Psoas muscle (tissue), 8 donors: ENCODE measurements at regions of chr22 and their contacts with region 1.

Region 1: DNA sequence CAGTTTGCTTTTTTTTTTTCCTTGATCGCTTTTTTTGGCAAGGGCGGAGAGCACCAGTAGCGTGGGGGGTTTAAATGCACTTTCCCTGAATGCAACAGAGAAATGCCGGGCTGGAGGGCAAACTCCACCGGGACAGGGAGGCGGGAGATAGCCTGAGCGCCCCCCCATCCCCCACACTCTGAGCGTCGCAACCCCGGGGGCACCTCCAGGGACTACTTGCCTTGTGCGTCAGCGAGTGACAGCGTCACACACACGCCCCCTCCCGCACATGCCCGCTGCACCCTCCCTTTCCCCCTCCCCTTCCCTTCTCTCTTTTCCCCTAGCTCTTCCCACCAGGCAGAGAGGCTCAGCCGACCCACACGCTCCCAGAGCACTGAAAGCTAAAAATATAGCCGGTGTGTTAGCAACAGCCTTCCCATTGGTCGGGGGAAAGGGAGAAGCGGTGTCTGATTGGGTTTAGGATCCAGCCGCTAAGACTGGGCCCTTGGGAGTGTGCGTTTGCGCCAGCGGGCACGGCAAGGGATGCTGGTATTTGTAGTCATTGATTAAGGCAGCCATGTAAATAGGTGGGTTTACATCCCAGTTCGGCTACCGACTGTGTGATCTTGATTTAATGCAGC is 1.7 kb upstream of the TOB2 start:
- DNase-seq: peak; percentile 94 to 98
- ATAC-seq: peak; percentile 65 to 78 (median 77)
- H3K4me3 ChIP-seq: peak overlapping the region; percentile 98
- H3K27ac ChIP-seq: peak overlapping the region; percentile 99
- H3K4me1 ChIP-seq: peaks cover 15% of the 10 kb centered on the region
- H3K27me3 ChIP-seq: no peaks in the 10 kb centered on the region
- CTCF ChIP-seq: no peak

Region 2: GRCh38 chr22:39502109-39502788 is 1946.0 kb before region 1 on chr22 and contains the start of gene MIEF1:
- intact Hi-C with region 1: no loop called
- DNase-seq: peak; percentile 98 to 99
- ATAC-seq: peak; percentile 98 to 99 (median 99)
- H3K4me3 ChIP-seq: peak within 1 kb of the TSS; percentile 87
- H3K27ac ChIP-seq: peak within 1 kb of the TSS; percentile 91
- H3K4me1 ChIP-seq: peaks cover 19% of the 10 kb centered on the region
- H3K27me3 ChIP-seq: no peaks in the 10 kb centered on the region
- CTCF ChIP-seq: no peak
- total RNA-seq, gene MIEF1: 8.6 to 18.7 (median 13.3) TPM

Region 3: GRCh38 chr22:41352051-41352450 is 96.2 kb before region 1 on chr22:
- intact Hi-C with region 1: no loop called
- DNase-seq: no peak
- ATAC-seq: peak in 1 of 4 donors; percentile 17
- H3K4me3 ChIP-seq: no peak overlapping the region
- H3K27ac ChIP-seq: no peak overlapping the region
- H3K4me1 ChIP-seq: no peaks in the 10 kb centered on the region
- H3K27me3 ChIP-seq: no peaks in the 10 kb centered on the region
- CTCF ChIP-seq: no peak

Region 4: GRCh38 chr22:41403532-41404318 is 44.6 kb before region 1 on chr22:
- intact Hi-C with region 1: loop called in 1 of 2 experiments (anchors 5 kb)
- DNase-seq: peak; percentile 94 to 98
- ATAC-seq: peak; percentile 92 to 95 (median 94)
- H3K4me3 ChIP-seq: no peak overlapping the region
- H3K27ac ChIP-seq: peak overlapping the region; percentile 80
- H3K4me1 ChIP-seq: peaks cover 22% of the 10 kb centered on the region
- H3K27me3 ChIP-seq: no peaks in the 10 kb centered on the region
- CTCF ChIP-seq: peak; percentile 99

Region 5: GRCh38 chr22:41468381-41469217 is 20.3 kb after region 1 on chr22 and contains the starts of genes ACO2 and PHF5A:
- intact Hi-C with region 1: loop called in 1 of 2 experiments (anchors 2 kb)
- DNase-seq: peak; percentile 98 to 99
- ATAC-seq: peak; percentile 91 to 97 (median 94)
- H3K4me3 ChIP-seq: peak within 1 kb of the TSS; percentile 98
- H3K27ac ChIP-seq: peak within 1 kb of the TSS; percentile 96
- H3K4me1 ChIP-seq: peaks cover 51% of the 10 kb centered on the region
- H3K27me3 ChIP-seq: no peaks in the 10 kb centered on the region
- CTCF ChIP-seq: no peak
- total RNA-seq, gene ACO2: 422 to 513 (median 474) TPM
- total RNA-seq, gene PHF5A: 19.9 to 40.0 (median 23.4) TPM

Region 6: GRCh38 chr22:41888627-41889200 is 440.4 kb after region 1 on chr22:
- intact Hi-C with region 1: no loop called
- DNase-seq: no peak
- ATAC-seq: no peak
- H3K4me3 ChIP-seq: no peak overlapping the region
- H3K27ac ChIP-seq: no peak overlapping the region
- H3K4me1 ChIP-seq: peaks cover 19% of the 10 kb centered on the region
- H3K27me3 ChIP-seq: no peaks in the 10 kb centered on the region
- CTCF ChIP-seq: no peak